Activated naive CD4-positive, alpha-beta T cell treated with anti-CD3 and anti-CD28 coated beads for 36 hours (primary cell): ENCODE measurements at regions of chr14 and their contacts with region 1.

Region 1: GRCh38 chr14:60164712-60165546 is at the start of gene DHRS7:
- DNase-seq: peak; percentile 65
- H3K4me3 Mint-ChIP-seq: peak within 1 kb of the TSS; percentile 89
- H3K27ac Mint-ChIP-seq: peak within 1 kb of the TSS; percentile 96
- H3K4me1 Mint-ChIP-seq: peaks cover 39% of the 10 kb centered on the region
- H3K27me3 Mint-ChIP-seq: no peaks in the 10 kb centered on the region
- total RNA-seq, gene DHRS7: 40.5 to 43.4 TPM

Region 2: GRCh38 chr14:60002819-60003492 is 162.0 kb before region 1 on chr14:
- CTCF ChIA-PET with region 1: no interaction called
- intact Hi-C with region 1: no loop called
- DNase-seq: no peak
- H3K4me3 Mint-ChIP-seq: no peak overlapping the region
- H3K27ac Mint-ChIP-seq: no peak overlapping the region
- H3K4me1 Mint-ChIP-seq: no peaks in the 10 kb centered on the region
- H3K27me3 Mint-ChIP-seq: peaks cover 3% of the 10 kb centered on the region

Region 3: DNA sequence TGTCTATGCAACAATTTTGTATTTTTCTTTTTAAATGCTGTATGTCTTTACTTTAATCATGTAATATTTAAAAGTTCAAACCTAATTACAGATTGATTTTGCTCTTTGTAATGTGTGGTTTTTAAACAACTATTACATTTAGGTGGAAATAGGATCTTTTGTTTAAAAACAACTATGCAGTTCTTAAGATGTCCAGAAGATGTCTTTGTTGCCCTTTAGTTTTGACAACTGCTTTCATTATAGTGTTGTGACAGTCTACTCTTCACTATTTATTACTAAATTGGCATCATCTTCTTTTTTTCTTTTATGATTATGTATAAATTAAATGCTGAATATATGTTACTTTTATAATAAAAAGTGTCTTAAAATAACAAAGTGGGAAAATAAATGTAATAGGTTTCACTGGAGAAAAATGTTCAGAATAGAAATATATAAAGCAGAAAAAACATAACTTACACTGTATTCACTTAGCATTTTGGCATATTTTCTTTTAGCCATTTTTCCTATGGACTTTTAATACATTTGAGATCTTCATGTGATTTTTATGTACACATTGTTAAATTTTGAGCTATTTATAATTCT is 100.3 kb before region 1 on chr14:
- CTCF ChIA-PET with region 1: interaction called, 6 read pairs
- intact Hi-C with region 1: loop called (anchors 1 kb)
- DNase-seq: no peak
- H3K4me3 Mint-ChIP-seq: no peak overlapping the region
- H3K27ac Mint-ChIP-seq: no peak overlapping the region
- H3K4me1 Mint-ChIP-seq: no peaks in the 10 kb centered on the region
- H3K27me3 Mint-ChIP-seq: peaks cover 1% of the 10 kb centered on the region

Region 4: DNA sequence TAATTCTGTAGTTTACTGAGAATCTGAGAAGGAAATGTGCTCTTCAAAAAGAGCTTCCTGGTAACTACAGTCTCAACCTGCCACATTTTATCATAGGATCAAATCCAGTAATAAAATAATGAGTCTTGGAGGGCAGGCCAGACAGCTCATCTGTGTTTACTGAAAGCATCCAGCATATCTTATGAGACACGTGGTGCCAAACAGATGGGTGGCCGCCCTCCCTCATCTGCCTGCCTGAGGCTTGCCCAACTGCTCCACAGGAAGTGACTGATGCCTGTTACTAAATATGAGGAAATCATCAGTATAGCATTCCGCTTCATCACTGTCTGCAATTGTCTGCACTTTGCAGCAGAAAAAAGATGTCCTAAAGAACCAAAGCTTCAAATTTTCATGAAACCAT is 13.2 kb before region 1 on chr14:
- CTCF ChIA-PET with region 1: interaction called, 4 read pairs
- intact Hi-C with region 1: loop called (anchors 1 kb)
- DNase-seq: peak; percentile 87
- H3K4me3 Mint-ChIP-seq: no peak overlapping the region
- H3K27ac Mint-ChIP-seq: peak overlapping the region; percentile 86
- H3K4me1 Mint-ChIP-seq: peaks cover 30% of the 10 kb centered on the region
- H3K27me3 Mint-ChIP-seq: no peaks in the 10 kb centered on the region

Region 5: DNA sequence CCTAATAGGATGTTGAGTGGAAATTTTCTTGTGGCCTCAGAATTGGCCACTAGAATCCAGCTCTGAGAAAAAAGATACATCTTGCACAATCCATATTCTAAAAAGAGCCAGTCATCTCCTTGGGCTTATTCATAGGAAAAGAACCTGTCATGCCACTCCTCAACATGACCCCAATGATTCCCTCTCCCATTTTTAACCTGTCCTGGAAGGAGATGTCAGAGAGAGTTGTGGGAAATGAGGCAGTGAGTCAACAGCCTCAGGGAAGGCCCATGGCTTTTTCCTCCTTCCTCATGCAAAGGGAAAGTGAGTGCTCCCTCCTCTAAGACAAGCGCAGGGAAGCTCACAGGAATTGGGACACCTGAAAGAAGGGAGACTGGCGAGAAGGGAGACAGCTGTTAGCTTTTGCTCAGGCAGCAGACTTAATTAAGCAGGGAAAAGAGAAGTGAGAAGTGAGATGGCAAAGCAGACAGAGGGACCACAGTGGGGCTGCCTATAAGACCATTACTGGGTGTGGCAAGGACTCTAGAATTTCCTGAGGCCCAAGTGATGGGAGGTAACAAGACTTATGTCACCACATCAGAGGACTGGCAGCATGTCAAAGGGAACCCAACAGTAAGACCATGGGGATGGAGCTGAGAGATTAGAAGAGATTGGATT is 10.4 kb after region 1 on chr14:
- CTCF ChIA-PET with region 1: no interaction called
- intact Hi-C with region 1: no loop called
- DNase-seq: no peak
- H3K4me3 Mint-ChIP-seq: no peak overlapping the region
- H3K27ac Mint-ChIP-seq: no peak overlapping the region
- H3K4me1 Mint-ChIP-seq: peaks cover 3% of the 10 kb centered on the region
- H3K27me3 Mint-ChIP-seq: peaks cover 6% of the 10 kb centered on the region